PC-9 (cell line): ENCODE measurements at regions of chr12 and their contacts with region 1.

Region 1: DNA sequence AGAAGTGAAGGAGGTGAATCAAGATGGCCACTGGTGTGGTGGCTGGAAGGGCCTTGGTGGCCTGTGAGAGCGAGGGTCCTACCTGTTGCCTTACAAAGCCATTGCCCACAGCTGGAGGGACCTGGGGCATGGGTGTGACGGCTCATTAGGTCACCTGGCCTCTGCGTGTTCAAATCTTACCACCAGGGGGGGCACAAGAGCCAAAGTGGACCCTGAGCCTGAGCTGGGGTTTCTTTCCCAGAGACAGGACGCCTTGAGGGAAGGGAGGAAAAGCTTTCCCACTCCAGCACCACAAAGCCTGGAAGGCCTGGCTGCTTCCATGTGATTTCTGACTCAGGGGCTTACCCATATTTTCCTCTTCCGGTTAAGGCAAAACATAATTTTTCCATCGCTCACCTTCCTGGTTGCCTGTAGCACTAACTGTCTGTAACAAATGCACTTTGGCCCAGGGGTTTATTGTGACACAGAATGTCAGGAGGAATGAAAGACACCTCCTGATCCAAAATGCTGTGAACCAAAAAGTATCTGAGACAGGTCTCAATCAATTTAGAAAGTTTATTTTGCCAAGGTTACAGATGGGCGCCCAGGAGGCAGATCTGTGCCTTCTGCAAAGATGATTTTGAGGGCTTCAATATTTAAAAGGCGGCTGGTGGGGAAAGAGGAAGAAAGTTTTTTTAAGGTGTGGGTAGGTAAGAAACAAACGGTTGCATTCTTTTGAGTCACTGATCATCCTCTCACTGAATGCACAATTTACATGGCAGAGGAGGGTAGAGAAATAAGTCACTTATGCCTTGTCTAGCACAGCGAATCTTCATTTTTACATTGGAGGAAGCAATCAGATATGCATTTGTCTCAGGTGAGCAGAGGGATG is 4.3 kb upstream of the CD9 start:
- DNase-seq: peak; percentile 91 to 96
- H3K4me3 ChIP-seq: no peak overlapping the region
- H3K27ac ChIP-seq: peak overlapping the region; percentile 86
- H3K4me1 ChIP-seq: peaks cover 43% of the 10 kb centered on the region
- H3K27me3 ChIP-seq: no peaks in the 10 kb centered on the region
- CTCF ChIP-seq: peak; percentile 96

Region 2: DNA sequence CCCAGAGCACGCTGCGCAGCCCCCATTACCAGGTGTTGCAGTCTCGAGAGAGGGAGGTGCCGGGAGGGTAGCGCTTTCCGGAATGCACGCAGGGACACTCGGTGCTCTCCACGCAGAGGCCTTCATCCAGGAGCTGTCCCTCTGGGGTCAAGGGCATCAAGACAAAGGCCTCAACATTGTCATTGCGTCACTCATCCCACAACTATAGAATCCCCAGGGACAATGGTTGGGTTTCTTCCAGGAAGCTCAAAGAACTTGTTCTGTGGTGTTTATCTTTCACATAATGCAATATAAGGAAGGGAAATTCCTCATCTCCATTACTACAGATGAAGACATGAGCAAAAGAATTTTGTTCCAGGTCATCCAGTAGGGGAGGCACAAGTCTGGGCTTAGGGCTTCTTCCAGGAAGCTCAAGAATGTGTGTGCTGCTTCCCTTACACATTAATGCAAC is 123.6 kb before region 1 on chr12:
- CTCF ChIA-PET with region 1: interaction called, 10 read pairs
- POLR2A ChIA-PET with region 1: interaction called, 9 read pairs
- intact Hi-C with region 1: no loop called
- DNase-seq: peak in 1 of 2 experiments; percentile 89
- H3K4me3 ChIP-seq: no peak overlapping the region
- H3K27ac ChIP-seq: no peak overlapping the region
- H3K4me1 ChIP-seq: peaks cover 10% of the 10 kb centered on the region
- H3K27me3 ChIP-seq: no peaks in the 10 kb centered on the region
- CTCF ChIP-seq: no peak; the same call in 1 of the 2 replicates

Region 3: DNA sequence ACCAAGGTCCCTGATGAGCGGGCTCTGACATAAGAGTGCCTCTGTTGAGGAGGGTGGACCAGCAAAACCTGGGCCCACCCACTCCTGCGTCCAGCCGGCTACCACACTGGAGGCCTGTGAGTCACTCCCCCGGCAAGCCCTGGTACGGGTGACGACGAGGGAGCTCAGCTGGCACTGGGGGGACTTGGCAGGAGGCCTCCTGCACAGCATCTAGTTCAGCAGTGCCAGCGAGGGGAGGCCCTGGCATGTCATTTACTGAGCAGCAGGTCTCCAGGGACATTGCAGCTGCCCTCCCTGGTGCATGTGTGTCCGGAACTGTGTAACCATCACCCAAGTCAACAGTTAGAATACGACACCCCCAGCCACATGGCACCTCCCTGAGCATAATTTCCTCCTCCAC is 28.6 kb after region 1 on chr12:
- CTCF ChIA-PET with region 1: interaction called, 5 read pairs
- POLR2A ChIA-PET with region 1: interaction called, 38 read pairs
- intact Hi-C with region 1: loop called (anchors 1 kb)
- DNase-seq: peak in 1 of 2 experiments; percentile 42
- H3K4me3 ChIP-seq: no peak overlapping the region
- H3K27ac ChIP-seq: no peak overlapping the region
- H3K4me1 ChIP-seq: peaks cover 88% of the 10 kb centered on the region
- H3K27me3 ChIP-seq: no peaks in the 10 kb centered on the region
- CTCF ChIP-seq: no peak

Region 4: DNA sequence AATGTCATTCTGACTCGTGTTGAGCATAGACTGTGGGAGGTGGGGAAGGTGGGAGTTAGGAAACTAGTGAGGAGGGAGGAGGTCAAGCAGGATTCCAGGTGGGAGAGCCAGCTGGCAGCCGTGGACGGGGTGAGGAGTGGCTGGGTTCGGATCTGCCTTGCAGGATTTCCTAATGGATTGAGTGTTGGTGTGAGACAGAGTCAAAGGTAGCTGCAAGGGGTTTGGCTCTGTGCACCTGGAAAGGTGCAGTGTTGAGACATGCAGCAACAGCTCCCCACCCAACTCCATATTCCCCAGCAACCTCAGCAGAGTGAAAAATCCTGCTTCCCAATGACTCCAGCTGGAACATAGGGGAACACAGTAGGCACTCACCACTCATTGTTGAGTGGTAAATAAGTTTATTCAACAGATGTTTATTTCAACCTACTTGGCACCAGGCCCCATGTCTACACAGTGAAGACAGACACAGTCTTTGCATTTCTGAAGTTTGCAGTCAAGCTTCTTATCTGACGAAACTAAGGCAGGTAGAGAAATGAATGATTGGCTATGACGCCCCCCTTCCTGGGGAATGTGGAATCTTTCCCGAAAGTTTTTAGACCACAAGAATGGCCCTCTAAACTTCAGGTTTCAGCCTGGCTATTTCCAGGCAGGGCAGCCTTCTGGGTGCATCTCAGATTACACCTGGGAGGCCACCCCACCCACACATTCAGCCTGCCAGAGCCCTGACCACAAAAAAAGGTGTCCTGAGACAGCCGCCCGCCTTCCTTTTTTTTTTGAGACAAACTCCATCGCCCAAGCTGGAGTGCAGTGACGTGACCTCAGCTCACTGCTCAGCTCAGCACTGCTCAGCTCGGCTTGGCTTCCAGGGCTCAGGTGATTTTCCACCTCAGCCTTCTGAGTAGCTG is 76.7 kb after region 1 on chr12:
- CTCF ChIA-PET with region 1: interaction called, 17 read pairs
- POLR2A ChIA-PET with region 1: interaction called, 25 read pairs
- intact Hi-C with region 1: loop called (anchors 1 kb)
- DNase-seq: peak; percentile 99
- H3K4me3 ChIP-seq: peak overlapping the region; percentile 23; the same call in 1 of the 2 replicates
- H3K27ac ChIP-seq: peak overlapping the region; percentile 98
- H3K4me1 ChIP-seq: peaks cover 64% of the 10 kb centered on the region
- H3K27me3 ChIP-seq: no peaks in the 10 kb centered on the region
- CTCF ChIP-seq: no peak

Region 5: DNA sequence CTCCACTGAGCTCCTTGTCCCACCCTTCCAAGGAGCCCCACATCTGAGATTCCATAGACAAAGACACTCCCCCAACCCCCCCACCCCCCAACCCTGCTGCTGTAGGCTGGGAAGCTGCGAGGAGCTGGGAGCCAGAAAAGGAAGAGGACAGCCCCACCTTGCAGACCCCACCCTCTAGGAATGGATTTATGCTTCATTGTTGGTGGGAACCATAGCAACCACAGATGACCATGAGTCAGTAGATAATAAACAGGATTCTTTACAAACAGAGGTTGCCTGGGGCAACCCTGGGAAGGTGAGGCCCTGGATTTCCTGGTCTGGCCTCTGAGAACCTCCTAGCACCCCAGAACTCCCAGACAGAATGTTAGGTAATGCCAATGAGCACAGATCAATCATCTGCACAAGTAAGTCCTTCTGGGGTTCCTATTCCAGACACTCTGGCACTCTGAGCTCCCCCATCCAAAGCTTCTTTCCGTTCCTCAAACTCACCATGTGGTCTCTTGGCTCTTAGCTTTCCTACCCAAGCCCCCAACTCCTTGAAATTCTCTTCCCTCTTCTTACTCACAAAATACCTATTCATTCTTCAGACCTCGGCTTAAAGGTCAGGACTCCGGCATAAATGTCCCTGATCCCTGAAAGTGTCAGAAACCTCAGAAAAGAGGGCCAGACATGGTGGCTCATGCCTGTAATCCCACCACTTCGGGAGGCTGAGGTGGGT is 99.4 kb after region 1 on chr12:
- CTCF ChIA-PET with region 1: no interaction called
- POLR2A ChIA-PET with region 1: interaction called, 35 read pairs
- intact Hi-C with region 1: no loop called
- DNase-seq: peak; percentile 95 to 99
- H3K4me3 ChIP-seq: no peak overlapping the region; the same call in 1 of the 2 replicates
- H3K27ac ChIP-seq: peak overlapping the region; percentile 91
- H3K4me1 ChIP-seq: peaks cover 64% of the 10 kb centered on the region
- H3K27me3 ChIP-seq: no peaks in the 10 kb centered on the region
- CTCF ChIP-seq: no peak